ENCODE measurements at regions of chr15 and their contacts with region 1.

Region 1: DNA sequence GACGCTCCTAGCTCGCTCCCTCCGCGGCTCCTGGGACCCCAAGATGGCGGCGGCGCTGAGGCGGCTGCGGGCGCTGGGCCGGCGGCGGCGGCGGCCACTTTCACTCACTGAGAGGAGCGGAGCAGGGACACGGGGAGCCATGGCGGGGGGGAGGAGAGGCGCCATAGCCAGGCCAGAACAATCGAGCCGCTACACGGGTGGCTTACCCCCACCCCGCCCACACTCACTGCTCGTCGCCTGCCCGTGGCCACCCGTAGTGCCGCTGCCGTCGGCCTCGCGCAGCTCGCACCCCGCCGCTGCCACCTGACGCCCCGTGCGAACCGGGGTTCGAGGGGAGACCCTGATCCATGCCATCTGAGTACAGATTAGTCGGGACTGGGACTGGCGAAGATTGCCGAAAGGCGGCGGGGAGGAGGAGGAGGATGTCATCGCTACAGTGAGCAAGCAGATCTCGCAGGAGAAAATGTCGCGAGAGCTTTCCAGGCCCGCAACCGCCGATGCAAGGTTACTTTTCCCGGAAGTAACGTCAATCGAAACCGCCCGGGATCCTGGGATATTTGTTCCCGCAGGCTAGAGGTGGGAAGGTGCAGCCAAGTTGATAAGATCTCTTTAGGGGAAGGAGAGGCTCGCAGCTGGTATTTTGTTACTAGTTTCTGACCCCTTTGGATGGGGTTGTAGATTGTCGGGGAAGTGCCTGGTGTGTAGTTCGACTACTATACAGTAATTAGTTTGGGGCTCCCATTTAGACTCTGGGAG is at the start of gene INO80:
- DNase-seq: peak; percentile 85 to 98
- H3K4me3 ChIP-seq: peak within 1 kb of the TSS; percentile 83 to 85
- H3K27ac ChIP-seq: peak within 1 kb of the TSS; percentile 97 to 98
- H3K4me1 ChIP-seq: peaks cover 0 to 11% of the 10 kb centered on the region in 2 donors
- H3K27me3 ChIP-seq: no peaks in the 10 kb centered on the region
- CTCF ChIP-seq: no peak
- total RNA-seq, gene INO80: 57.8 TPM

Region 2: DNA sequence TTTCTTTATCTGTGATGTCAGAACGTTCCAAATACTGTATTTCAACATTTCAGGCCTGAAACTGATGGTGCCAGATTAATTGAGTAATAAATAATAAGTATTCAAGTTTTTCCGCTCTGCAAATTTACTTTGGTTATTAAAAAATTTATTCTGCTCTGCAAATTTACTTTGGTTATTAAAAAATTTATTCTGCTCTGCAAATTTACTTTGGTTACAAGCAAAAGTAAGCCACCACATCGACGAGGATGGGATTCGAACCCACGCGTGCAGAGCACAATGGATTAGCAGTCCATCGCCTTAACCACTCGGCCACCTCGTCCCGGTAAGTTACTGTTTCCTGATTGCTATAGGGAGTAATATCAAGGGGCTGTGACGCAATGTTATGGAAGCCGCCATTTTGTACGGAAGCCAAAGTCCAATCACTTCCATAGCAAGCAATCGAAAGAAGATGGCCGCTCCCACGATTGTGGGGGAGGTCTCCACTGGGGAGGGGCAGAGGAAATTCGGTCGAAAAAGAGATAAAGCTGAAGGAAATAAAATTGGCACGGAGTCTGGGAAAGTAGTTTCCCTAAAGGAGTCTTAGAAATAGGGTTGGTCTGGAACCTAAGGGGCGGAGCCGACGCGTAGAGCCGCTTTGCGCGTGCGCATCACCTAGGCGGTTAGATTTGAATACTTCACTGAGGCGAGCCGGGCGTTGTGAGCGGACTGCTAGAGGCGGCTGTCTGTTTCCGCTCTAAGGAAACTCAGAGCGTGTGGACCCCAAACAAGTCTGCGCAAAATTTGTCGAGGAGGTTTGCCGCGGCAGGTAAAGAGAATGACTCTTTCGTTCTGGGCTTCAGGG is 522.5 kb before region 1 on chr15 and contains the start of gene KNL1:
- intact Hi-C with region 1: loop called (anchors 5 kb)
- DNase-seq: peak; percentile 72 to 96
- H3K4me3 ChIP-seq: peak within 1 kb of the TSS; percentile 50 to 73
- H3K27ac ChIP-seq: peak within 1 kb of the TSS; percentile 78 to 87
- H3K4me1 ChIP-seq: peaks cover 0 to 9% of the 10 kb centered on the region in 2 donors
- H3K27me3 ChIP-seq: no peaks in the 10 kb centered on the region
- CTCF ChIP-seq: no peak
- total RNA-seq, gene KNL1: not detected

Region 3: GRCh38 chr15:40893733-40894688 is 222.3 kb before region 1 on chr15 and contains the start of gene VPS18:
- intact Hi-C with region 1: loop called (anchors 5 kb)
- DNase-seq: peak; percentile 91 to 99
- H3K4me3 ChIP-seq: peak within 1 kb of the TSS; percentile 65 to 82
- H3K27ac ChIP-seq: peak within 1 kb of the TSS; percentile 85 to 89
- H3K4me1 ChIP-seq: peaks cover 0 to 13% of the 10 kb centered on the region in 2 donors
- H3K27me3 ChIP-seq: no peaks in the 10 kb centered on the region
- CTCF ChIP-seq: peak; percentile 98 to 99 (median 98)
- total RNA-seq, gene VPS18: 51.8 TPM

Region 4: DNA sequence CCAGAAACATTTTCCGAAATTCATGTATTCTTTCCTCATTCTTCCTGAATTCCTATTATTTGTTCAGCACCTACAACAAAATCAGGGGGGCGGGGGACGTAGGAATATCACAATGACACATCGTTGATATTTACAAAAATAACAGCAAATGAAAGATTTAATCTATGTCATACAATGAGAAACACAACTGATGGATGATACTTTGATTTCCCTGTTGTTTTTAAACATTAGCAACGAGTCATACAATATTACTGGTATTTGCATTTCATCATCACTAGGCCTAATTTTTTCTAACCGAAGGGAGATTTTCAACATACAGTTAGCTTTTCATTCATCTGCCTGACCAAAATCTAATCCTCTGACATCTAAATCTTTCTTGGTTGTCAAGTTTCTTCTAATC is 45.0 kb after region 1 on chr15:
- intact Hi-C with region 1: no loop called
- DNase-seq: no peak
- H3K4me3 ChIP-seq: no peak overlapping the region
- H3K27ac ChIP-seq: no peak overlapping the region
- H3K4me1 ChIP-seq: no peaks in the 10 kb centered on the region
- H3K27me3 ChIP-seq: no peaks in the 10 kb centered on the region
- CTCF ChIP-seq: no peak

Region 5: DNA sequence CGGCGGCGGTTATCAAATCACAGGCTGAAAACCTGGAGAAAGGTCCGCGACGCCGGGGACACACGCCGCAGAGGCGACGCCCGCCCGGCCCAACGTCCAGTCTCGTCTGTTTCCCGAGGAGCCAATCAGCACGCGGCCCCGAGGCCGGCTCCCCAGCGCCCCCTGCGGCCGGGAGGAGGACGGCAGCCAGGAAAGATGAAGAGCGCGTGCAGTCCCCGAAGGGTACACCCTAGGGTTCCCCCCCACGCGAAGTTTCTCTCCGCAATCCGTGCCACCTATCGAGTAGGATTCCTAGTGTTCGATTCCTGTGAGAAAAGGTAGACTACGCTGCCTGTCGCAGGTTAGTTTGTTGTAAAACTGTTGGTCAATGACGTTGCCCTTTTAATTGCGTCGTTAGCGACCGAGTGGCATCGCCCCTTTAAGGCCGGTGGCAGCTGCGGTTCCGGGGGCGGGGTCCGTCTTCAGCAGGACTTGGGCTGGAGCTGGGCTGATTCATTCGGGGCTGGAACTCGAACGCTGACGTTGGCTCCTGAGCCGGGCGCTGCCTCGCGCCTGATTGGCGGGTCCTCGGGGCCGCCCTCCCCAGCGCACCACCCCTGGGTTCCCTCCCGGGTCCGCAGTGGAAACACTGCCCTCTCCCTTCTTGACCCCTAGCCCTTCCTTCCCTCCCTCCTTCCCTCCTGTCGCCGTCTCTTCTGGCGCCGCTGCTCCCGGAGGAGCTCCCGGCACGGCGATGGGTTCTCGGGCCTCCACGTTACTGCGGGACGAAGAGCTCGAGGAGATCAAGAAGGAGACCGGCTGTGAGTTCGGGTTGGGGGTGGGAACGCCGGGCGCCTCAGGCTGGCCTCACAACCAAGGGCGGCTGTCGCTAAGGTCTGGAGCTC is 114.6 kb after region 1 on chr15 and contains the starts of genes CHP1 and EXD1:
- intact Hi-C with region 1: loop called (anchors 1 kb)
- DNase-seq: peak; percentile 89 to 99
- H3K4me3 ChIP-seq: peak within 1 kb of the TSS; percentile 70 to 89
- H3K27ac ChIP-seq: peak within 1 kb of the TSS; percentile 80 to 96
- H3K4me1 ChIP-seq: peaks cover 0 to 23% of the 10 kb centered on the region in 2 donors
- H3K27me3 ChIP-seq: no peaks in the 10 kb centered on the region
- CTCF ChIP-seq: peak; percentile 97 to 99 (median 99)
- total RNA-seq, gene CHP1: 294 TPM
- total RNA-seq, gene EXD1: not detected

Region 6: DNA sequence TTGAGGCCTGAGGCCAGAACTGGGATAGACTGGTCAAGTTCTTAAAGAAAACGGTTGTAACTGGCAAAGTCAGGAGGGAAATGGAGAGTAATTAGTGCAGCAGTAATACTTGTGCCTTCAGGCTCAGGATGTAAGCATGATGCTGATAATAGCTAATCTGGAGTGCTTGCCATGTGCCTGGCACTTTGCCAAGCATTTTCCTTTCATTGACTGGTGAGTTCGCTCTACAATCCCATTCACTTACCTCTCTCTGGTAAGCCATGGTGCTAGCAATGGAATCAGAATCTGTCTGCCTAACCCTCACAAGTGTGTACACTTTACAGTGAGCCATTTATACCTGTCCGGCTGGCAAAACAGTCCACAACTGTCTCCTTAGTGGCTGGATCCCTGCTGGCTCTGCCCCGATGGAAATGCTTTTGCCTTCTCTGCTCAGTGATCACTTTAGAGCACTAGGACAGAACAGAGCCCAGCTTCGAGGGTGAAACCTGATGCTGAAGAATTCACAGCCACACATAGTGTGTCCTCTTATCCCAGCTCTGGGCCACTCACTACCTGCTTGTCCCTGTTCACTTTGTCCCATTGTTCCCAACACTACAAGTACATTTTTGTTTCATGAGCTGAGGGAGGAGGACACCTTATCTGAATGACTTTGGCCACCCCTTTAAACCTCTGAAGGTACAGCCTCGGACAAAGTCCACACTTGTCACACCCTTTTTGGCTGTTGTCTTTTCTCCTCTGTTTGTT is 125.1 kb after region 1 on chr15:
- intact Hi-C with region 1: no loop called
- DNase-seq: no peak
- H3K4me3 ChIP-seq: no peak overlapping the region
- H3K27ac ChIP-seq: no peak overlapping the region
- H3K4me1 ChIP-seq: no peaks in the 10 kb centered on the region
- H3K27me3 ChIP-seq: no peaks in the 10 kb centered on the region
- CTCF ChIP-seq: no peak

Region 7: DNA sequence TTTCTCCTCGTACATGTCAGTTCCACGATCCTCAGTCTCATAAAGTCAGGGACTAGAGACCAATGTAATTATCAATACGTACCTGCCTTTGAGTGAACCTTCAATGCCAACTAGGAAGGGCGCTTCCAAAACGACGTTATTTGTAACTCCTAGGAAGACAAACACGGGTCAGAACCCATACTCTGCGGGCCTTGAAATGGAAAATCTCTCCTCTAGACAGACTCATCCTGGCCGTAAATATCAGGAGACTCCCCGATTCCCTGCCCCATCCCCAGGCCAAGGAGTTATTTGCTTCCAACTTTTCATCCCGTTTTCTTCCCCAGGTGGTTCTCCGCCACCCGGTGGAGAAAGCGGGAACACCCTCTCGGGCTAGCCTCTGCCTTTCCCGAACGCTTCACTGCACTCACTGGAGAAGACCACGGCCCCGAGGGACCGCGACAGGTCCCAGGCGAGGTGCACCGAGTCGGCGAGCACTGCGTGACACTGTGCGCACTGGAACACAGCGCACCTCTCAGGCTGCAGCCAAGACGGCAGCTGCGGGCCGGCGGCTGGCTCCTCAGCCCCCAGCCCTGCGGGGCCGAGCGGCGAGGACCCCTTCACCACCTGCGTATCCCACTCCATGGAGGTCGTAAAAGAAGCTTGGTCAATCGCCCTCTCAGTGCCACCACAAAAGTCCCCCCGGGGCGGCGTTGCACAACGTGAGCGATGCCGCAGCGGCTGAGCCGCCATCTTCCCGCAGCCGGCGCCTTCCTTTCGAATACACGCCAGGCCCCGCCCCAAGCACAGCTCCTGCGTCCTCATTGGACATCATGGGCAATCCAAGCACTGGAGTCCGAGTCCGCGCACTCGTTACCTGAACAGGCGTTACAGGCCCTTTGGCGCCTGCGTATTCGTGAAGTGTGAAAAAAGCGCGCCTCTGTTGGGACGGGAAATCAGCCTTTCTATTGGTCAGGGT is 215.8 kb after region 1 on chr15 and contains the start of gene OIP5:
- intact Hi-C with region 1: loop called (anchors 5 kb)
- DNase-seq: peak; percentile 96 to 99
- H3K4me3 ChIP-seq: peak within 1 kb of the TSS; percentile 89 to 91
- H3K27ac ChIP-seq: peak within 1 kb of the TSS in 1 of 2 donors; percentile 40
- H3K4me1 ChIP-seq: peaks cover 0 to 8% of the 10 kb centered on the region in 2 donors
- H3K27me3 ChIP-seq: no peaks in the 10 kb centered on the region
- CTCF ChIP-seq: peak; percentile 59 to 74 (median 67)
- total RNA-seq, gene OIP5: not detected